ENCODE measurements at regions of chr16 and their contacts with region 1.

Region 1: DNA sequence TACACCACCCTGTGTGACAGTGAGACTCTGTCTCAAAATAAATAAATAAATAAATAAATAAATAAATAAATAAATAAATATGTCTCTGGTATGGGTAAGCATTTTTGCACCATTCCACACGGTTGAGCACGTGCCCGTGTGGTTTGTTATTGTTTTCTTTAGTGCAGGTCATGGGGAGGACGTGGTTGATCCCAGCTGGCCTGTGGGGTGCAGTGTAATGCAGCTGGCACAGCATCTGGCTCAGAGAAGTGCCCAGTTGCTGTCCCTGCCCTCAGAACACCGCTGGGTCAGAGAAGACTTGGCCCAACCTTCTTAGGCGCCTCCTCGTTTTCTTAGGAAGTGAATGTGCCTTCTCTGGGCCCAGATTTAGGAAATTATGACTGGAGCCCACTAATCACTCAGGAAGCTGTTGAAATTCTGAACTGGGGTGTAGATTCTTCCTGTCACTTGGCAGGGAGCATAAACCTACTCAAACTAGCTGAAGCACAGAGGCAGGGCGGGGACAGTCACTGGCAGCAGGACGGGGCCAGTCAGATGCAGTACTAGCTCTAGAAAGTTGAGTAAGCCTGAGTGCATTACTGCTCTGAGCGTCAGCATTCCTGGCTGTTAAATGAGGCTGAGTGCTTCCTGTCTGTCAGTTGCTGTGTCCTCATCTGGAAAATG is 85.9 kb downstream of the SNX29 start:
- H3K4me3 ChIP-seq: no peak overlapping the region
- H3K27ac ChIP-seq: no peak overlapping the region
- H3K4me1 ChIP-seq: no peaks in the 10 kb centered on the region
- CTCF ChIP-seq: no peak

Region 2: DNA sequence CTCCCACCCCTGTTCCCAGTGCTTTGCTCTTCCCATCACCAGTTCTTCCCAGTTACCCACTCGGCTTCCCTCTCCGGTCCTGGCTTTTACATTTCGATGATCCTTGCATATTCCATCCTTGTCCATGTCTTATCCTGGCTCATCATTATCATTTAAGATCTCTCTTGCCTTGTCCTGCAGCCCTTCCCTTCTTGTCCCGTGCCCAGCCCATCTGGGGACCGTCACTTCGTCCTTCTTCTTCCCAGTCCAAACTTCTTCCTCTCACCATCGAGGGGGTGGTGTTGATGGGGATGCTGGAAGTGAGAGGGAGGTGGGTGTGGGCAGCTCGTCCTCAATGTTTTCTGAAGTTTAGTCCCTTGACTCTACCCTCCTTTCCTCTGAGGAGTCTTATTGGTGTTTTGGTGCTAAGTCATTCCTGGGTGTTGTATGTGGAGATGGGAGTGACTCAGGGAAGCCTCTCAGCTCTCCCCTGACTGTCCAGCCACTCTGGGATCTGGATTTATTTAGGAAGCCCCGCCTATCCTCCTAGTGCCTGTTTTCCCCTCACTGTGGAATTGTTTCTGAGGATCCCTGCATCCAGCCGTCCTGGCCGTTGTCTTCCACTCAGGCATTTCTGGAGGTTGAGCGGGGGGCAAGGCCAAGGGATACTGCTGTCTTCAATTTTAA is 85.0 kb before region 1 on chr16:
- CTCF ChIA-PET with region 1: interaction called, 20 read pairs
- POLR2A ChIA-PET with region 1: interaction called, 10 read pairs
- H3K4me3 ChIP-seq: peak overlapping the region; percentile 94
- H3K27ac ChIP-seq: no peak overlapping the region
- H3K4me1 ChIP-seq: peaks cover 6% of the 10 kb centered on the region; the same call in 1 of the 2 replicates
- CTCF ChIP-seq: no peak

Region 3: GRCh38 chr16:12043953-12044352 is 18.5 kb before region 1 on chr16:
- CTCF ChIA-PET with region 1: no interaction called
- POLR2A ChIA-PET with region 1: no interaction called
- H3K4me3 ChIP-seq: no peak overlapping the region
- H3K27ac ChIP-seq: no peak overlapping the region
- H3K4me1 ChIP-seq: no peaks in the 10 kb centered on the region; the same call in 1 of the 2 replicates
- CTCF ChIP-seq: no peak

Measured in HEK293 (cell line).